Esophagus muscularis mucosa (tissue), 4 donors: ENCODE measurements at regions of chr18 and their contacts with region 1.

Region 1: GRCh38 chr18:68660354-68661183 is 54.3 kb downstream of the TMX3 start:
- DNase-seq: no peak
- H3K4me3 ChIP-seq: no peak overlapping the region
- H3K27ac ChIP-seq: no peak overlapping the region
- H3K4me1 ChIP-seq: peaks cover 0 to under 1% (median 0%) of the 10 kb centered on the region in 4 donors
- H3K27me3 ChIP-seq: no peaks in the 10 kb centered on the region
- CTCF ChIP-seq: peak; percentile 28 to 55 (median 50)
- EP300 ChIP-seq: no peak
- POLR2A ChIP-seq: no peak

Region 2: GRCh38 chr18:67217551-67218166 is 1442.9 kb before region 1 on chr18:
- intact Hi-C with region 1: loop called (anchors 5 kb)
- DNase-seq: no peak
- H3K4me3 ChIP-seq: no peak overlapping the region
- H3K27ac ChIP-seq: no peak overlapping the region
- H3K4me1 ChIP-seq: no peaks in the 10 kb centered on the region
- H3K27me3 ChIP-seq: peaks cover 0 to 5% (median 0%) of the 10 kb centered on the region in 4 donors
- CTCF ChIP-seq: peak; percentile 72 to 84 (median 83)
- EP300 ChIP-seq: no peak
- POLR2A ChIP-seq: no peak